ENCODE measurements at regions of chrX and their contacts with region 1.

Region 1: GRCh38 chrX:115040417-115040816 is 23.0 kb upstream of the IL13RA2 start:
- DNase-seq: no peak
- ATAC-seq: no peak
- H3K4me3 ChIP-seq: no peak overlapping the region
- H3K27ac ChIP-seq: no peak overlapping the region
- H3K4me1 ChIP-seq: no peaks in the 10 kb centered on the region
- H3K27me3 ChIP-seq: no peaks in the 10 kb centered on the region
- CTCF ChIP-seq: no peak
- EP300 ChIP-seq: no peak
- POLR2A ChIP-seq: no peak
- RAD21 ChIP-seq: no peak

Region 2: GRCh38 chrX:115018037-115018647 is 22.3 kb before region 1 on chrX:
- CTCF ChIA-PET with region 1: interaction called, 10 read pairs
- POLR2A ChIA-PET with region 1: no interaction called
- RAD21 ChIA-PET with region 1: no interaction called
- SMC1A ChIA-PET with region 1: interaction called, 4 read pairs
- in situ Hi-C with region 1: no loop called
- intact Hi-C with region 1: no loop called
- DNase-seq: no peak
- ATAC-seq: no peak
- H3K4me3 ChIP-seq: no peak overlapping the region
- H3K27ac ChIP-seq: no peak overlapping the region
- H3K4me1 ChIP-seq: no peaks in the 10 kb centered on the region
- H3K27me3 ChIP-seq: no peaks in the 10 kb centered on the region
- CTCF ChIP-seq: peak in 2 of 3 experiments; percentile 33 to 34; a peak in 3 of 6 replicates
- EP300 ChIP-seq: no peak
- POLR2A ChIP-seq: no peak
- RAD21 ChIP-seq: no peak

Region 3: GRCh38 chrX:115268421-115268820 is 228.0 kb after region 1 on chrX:
- CTCF ChIA-PET with region 1: no interaction called
- POLR2A ChIA-PET with region 1: no interaction called
- RAD21 ChIA-PET with region 1: no interaction called
- SMC1A ChIA-PET with region 1: no interaction called
- in situ Hi-C with region 1: no loop called
- intact Hi-C with region 1: no loop called
- DNase-seq: no peak
- ATAC-seq: peak; percentile 72
- H3K4me3 ChIP-seq: no peak overlapping the region
- H3K27ac ChIP-seq: no peak overlapping the region
- H3K4me1 ChIP-seq: no peaks in the 10 kb centered on the region
- H3K27me3 ChIP-seq: no peaks in the 10 kb centered on the region
- CTCF ChIP-seq: peak; percentile 21 to 36 (median 23); a peak in 2 of 6 replicates
- EP300 ChIP-seq: no peak
- POLR2A ChIP-seq: no peak
- RAD21 ChIP-seq: peak; percentile 15; the same call in 1 of the 2 replicates

Measured in GM12878 (cell line).